Transverse colon (tissue), 4 donors: ENCODE measurements at regions of chr6 and their contacts with region 1.

Region 1: DNA sequence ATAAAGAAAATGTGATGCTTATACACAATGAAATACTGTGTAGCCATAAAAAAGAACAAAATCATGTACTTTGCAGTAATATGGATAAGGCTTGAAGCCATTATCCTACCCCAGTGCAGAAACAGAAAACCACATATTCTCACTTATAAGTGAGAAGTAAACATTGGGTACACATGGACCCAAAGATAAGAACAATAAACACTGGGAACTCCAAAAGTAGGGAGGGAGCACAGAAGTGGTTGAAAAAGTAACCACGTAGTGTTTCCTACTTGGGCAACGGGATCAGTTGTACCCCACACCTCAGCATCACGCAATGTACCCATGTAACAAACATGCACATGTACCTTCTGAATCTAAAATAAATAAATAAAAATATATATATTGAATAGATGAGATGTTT is 8.2 kb downstream of the IRAK1BP1 start:
- DNase-seq: no peak
- H3K4me3 ChIP-seq: no peak overlapping the region
- H3K27ac ChIP-seq: no peak overlapping the region
- H3K4me1 ChIP-seq: no peaks in the 10 kb centered on the region
- H3K27me3 ChIP-seq: no peaks in the 10 kb centered on the region
- CTCF ChIP-seq: no peak
- EP300 ChIP-seq: no peak
- POLR2A ChIP-seq: no peak

Region 2: DNA sequence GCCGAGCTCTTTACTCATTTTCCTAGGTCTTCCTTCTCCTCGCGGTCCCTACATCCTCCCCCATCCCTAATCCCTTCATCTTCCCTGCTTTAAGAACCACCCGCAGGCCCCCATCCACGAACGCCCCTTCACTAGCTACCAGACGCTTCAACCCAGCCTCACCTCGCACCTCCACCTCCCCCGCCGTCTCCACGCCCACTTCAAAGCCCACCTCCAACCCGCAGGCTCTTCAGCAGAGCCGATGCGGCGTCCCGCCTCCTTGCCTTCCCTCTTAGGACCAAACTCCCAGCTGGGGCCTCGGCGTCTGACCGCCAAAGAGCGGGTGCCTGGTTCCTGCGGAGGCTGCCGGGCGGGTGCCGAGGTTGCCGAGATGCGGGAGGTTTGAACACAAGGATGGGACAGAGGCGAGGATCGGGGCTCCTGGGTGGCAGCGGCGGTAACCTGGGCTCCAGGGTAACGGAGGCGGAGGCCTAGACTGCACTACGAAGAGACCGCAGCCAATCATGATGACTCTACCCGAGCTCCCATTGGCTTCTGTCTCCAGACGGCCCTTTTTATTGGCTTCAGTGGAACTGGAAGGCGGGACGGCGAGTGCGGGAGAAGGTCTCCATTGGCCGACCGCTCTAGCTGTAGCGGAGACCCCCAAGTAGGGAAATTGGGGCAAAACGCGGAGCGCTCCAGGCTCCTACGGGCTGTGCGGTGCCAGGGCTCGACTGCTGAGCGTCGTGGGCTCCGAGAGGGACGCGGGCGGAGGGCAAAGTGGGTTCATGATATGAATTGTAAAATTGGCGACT is 661.6 kb after region 1 on chr6 and contains the start of gene LCA5:
- in situ Hi-C with region 1: no loop called
- intact Hi-C with region 1: loop called (anchors 5 kb)
- DNase-seq: peak; percentile 91
- H3K4me3 ChIP-seq: peak within 1 kb of the TSS; percentile 69 to 84 (median 78)
- H3K27ac ChIP-seq: peak within 1 kb of the TSS; percentile 87 to 93 (median 90)
- H3K4me1 ChIP-seq: peaks cover 0 to 8% (median 5%) of the 10 kb centered on the region in 4 donors
- H3K27me3 ChIP-seq: no peaks in the 10 kb centered on the region
- CTCF ChIP-seq: no peak
- EP300 ChIP-seq: no peak
- POLR2A ChIP-seq: peak; percentile 47
- total RNA-seq, gene LCA5: 0.37 to 2.2 (median 1.6) TPM in 3 of 4 donors, not detected in the other